Activated naive CD4-positive, alpha-beta T cell treated with anti-CD3 and anti-CD28 coated beads for 36 hours (primary cell): ENCODE measurements at regions of chr3 and their contacts with region 1.

Region 1: DNA sequence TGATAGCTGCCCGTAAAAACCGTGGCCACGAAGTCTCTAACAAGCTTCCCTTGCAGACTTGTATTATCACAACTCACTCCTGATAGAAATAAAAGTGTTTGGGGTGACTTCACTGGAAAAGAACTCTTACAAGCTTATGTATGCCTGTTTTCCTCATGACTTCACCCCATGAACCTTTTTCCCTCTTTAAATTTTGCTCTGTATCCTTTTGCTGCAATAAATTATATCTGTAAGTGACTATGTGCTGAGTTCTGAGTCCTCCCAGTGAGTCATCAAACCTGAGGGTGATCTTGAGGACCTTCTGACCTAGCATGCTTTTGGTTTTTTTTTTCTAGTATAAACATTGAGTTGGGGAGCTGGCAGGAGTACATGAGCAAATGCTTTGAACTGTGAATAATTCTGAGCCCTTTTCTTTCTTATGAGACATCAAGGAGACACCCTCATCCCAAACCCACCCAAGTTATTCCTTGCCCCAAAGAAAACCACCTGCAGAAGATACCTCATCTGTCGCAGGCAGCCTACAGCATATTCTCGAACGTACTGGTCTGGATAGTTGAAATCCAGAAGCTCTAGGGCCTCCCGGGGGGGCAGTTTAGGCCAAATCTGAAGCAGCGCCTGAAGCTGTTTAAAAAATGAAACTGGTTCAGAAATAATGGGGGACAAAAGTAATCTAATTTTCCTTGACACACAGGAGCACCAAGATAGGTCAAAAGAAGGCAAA is 85.9 kb downstream of the FAIM start:
- DNase-seq: no peak
- H3K4me3 Mint-ChIP-seq: no peak overlapping the region
- H3K27ac Mint-ChIP-seq: no peak overlapping the region
- H3K4me1 Mint-ChIP-seq: peaks cover 3% of the 10 kb centered on the region
- H3K27me3 Mint-ChIP-seq: no peaks in the 10 kb centered on the region

Region 2: DNA sequence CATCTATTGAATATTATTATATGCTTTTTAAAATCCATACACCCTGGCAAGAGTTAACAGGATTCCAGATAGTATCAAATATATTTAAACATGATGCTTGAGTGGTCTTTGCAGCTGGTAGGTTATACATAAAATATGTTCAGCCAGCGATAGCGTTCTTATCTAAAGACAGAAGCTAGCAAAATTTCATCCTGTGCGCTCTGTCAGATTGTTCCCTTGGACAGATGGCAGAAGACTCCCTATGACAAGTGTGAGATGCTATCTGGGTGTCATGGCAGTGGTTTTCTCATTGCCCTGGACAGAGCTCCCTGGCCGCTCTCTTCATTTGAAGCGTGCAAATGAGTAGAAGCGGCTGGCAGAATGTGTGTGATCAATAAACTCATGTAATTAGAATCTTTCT is 1105.6 kb before region 1 on chr3:
- CTCF ChIA-PET with region 1: no interaction called
- intact Hi-C with region 1: no loop called
- DNase-seq: no peak
- H3K4me3 Mint-ChIP-seq: no peak overlapping the region
- H3K27ac Mint-ChIP-seq: no peak overlapping the region
- H3K4me1 Mint-ChIP-seq: no peaks in the 10 kb centered on the region
- H3K27me3 Mint-ChIP-seq: no peaks in the 10 kb centered on the region

Region 3: GRCh38 chr3:138479438-138479863 is 215.0 kb before region 1 on chr3:
- CTCF ChIA-PET with region 1: interaction called, 3 read pairs
- intact Hi-C with region 1: loop called (anchors 5 kb)
- DNase-seq: peak; percentile 65
- H3K4me3 Mint-ChIP-seq: no peak overlapping the region
- H3K27ac Mint-ChIP-seq: no peak overlapping the region
- H3K4me1 Mint-ChIP-seq: no peaks in the 10 kb centered on the region
- H3K27me3 Mint-ChIP-seq: no peaks in the 10 kb centered on the region